Aorta (tissue), 5 donors: ENCODE measurements at regions of chr1 and their contacts with region 1.

Region 1: GRCh38 chr1:175887981-175888433 is 144.6 kb upstream of the TNR start:
- DNase-seq: peak; percentile 75 to 88
- ATAC-seq: peak; percentile 84
- H3K4me3 ChIP-seq: no peak overlapping the region
- H3K27ac ChIP-seq: no peak overlapping the region
- H3K4me1 ChIP-seq: peaks cover 6 to 9% of the 10 kb centered on the region in 2 donors
- H3K27me3 ChIP-seq: no peaks in the 10 kb centered on the region

Region 2: GRCh38 chr1:175373786-175374623 is 514.0 kb before region 1 on chr1:
- intact Hi-C with region 1: loop called in 1 of 2 experiments (anchors 5 kb)
- DNase-seq: no peak
- ATAC-seq: peak; percentile 70
- H3K4me3 ChIP-seq: no peak overlapping the region
- H3K27ac ChIP-seq: no peak overlapping the region
- H3K4me1 ChIP-seq: no peaks in the 10 kb centered on the region
- H3K27me3 ChIP-seq: no peaks in the 10 kb centered on the region

Region 3: DNA sequence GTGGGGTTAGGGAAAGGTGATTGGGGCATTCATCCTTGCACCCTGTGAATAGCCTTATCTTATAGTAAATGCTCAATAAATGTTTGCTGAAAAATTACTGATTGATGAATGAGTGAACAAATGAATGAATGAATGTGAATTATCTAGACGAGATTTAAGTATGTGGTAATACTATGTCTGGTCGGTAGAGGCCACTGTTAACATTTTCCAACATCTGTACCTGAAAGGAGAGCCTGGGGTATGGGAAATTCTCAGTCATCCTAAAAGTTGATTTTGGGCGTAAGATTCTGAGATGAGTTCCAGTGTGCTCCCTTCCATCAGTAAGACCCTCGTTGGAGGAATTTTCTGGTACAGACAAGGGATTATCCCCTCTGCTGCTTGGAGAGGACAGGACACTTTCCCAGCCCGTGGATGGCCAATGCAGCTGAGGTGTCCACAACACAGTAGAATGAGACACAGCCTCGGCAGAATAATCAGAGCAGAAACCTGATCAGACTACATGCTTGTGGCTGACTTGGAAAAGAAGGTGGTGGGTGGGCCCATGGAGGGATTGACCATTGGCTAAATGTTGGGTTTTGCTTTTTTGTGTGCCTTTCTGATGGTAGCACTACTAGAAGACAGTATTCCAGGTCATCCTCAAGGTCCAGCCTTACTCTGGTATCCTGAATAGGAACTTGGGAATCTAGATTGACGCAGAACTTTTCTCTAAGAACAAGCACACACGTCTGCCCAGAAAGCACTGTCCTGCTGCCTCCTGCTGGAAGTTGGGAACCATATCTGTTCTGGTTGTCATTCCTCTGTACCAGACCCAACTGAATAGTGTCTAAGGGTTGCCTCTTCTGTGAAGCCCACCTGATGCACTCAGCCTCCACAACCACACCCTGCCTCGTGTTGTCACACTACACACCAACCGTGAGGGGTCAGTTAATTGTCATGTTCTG is 406.6 kb before region 1 on chr1:
- intact Hi-C with region 1: loop called (anchors 2 to 5 kb)
- DNase-seq: no peak
- ATAC-seq: peak; percentile 51
- H3K4me3 ChIP-seq: no peak overlapping the region
- H3K27ac ChIP-seq: no peak overlapping the region
- H3K4me1 ChIP-seq: peaks cover 0 to 4% of the 10 kb centered on the region in 2 donors
- H3K27me3 ChIP-seq: no peaks in the 10 kb centered on the region

Region 4: DNA sequence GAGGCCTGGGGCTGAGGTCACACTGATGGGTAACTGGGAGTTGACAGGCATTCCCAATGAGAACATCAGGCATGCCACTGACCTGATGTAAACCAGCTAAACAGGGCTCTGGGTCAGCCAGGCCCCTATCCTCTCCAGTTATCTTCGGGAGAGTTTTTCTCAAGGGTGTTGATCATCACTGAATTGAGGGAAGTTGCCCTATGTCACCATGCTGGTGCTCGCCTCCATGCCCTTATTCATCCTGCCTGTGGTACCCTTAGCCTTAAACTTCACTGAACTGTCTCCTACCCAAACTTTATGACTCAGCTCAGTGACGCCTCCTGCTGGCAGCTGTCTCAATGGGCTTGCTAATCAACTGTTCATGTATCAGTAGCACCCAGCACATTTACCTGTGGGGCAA is 63.9 kb before region 1 on chr1:
- intact Hi-C with region 1: loop called in 1 of 2 experiments (anchors 2 kb)
- DNase-seq: peak in 1 of 2 donors; percentile 50
- ATAC-seq: no peak
- H3K4me3 ChIP-seq: no peak overlapping the region
- H3K27ac ChIP-seq: no peak overlapping the region
- H3K4me1 ChIP-seq: peaks cover 2 to 9% of the 10 kb centered on the region in 2 donors
- H3K27me3 ChIP-seq: no peaks in the 10 kb centered on the region

Region 5: GRCh38 chr1:176066709-176067108 is 178.7 kb after region 1 on chr1:
- intact Hi-C with region 1: loop called in 1 of 2 experiments (anchors 10 kb)
- DNase-seq: no peak
- ATAC-seq: no peak
- H3K4me3 ChIP-seq: no peak overlapping the region
- H3K27ac ChIP-seq: no peak overlapping the region
- H3K4me1 ChIP-seq: no peaks in the 10 kb centered on the region
- H3K27me3 ChIP-seq: no peaks in the 10 kb centered on the region